Activated CD4-positive, alpha-beta memory T cell treated with anti-CD3 and anti-CD28 coated beads for 36 hours (primary cell): ENCODE measurements at regions of chr14 and their contacts with region 1.

Region 1: DNA sequence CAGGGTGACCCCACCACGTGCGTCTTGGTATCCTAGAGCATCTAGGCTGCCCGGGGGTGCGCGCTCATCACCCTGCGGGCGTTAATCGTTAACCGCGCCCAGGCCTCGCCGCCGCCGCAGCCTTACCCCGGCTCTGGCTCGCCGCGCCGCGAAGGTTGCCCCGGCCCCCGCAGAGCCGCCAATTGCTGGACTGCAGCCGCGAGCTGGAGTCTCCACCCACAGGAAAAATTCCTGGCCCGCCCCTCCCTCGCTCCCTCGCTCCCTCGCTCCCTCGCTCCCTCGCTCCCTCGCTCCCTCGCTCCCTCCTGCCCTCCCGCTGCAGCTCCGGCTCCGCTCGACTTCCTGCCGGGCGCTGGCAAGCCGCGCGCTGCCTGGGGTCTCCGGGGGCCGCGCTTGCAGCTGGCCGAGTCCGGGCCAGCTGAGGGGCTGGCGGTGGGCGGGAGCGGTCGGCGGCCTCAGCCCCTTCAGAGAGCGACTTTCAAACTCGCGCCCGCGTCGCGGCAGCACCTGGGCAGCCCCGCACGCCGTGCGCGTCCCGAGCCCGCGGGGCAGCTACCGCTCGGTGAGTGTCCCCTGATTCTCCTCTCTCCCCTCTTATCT is at the start of gene PLEKHG3:
- DNase-seq: peak; percentile 53
- H3K4me3 Mint-ChIP-seq: peak within 1 kb of the TSS; percentile 77
- H3K27ac Mint-ChIP-seq: peak within 1 kb of the TSS; percentile 82
- H3K4me1 Mint-ChIP-seq: peaks cover 63% of the 10 kb centered on the region
- H3K27me3 Mint-ChIP-seq: no peaks in the 10 kb centered on the region
- total RNA-seq, gene PLEKHG3: 20.1 to 22.6 TPM

Region 2: DNA sequence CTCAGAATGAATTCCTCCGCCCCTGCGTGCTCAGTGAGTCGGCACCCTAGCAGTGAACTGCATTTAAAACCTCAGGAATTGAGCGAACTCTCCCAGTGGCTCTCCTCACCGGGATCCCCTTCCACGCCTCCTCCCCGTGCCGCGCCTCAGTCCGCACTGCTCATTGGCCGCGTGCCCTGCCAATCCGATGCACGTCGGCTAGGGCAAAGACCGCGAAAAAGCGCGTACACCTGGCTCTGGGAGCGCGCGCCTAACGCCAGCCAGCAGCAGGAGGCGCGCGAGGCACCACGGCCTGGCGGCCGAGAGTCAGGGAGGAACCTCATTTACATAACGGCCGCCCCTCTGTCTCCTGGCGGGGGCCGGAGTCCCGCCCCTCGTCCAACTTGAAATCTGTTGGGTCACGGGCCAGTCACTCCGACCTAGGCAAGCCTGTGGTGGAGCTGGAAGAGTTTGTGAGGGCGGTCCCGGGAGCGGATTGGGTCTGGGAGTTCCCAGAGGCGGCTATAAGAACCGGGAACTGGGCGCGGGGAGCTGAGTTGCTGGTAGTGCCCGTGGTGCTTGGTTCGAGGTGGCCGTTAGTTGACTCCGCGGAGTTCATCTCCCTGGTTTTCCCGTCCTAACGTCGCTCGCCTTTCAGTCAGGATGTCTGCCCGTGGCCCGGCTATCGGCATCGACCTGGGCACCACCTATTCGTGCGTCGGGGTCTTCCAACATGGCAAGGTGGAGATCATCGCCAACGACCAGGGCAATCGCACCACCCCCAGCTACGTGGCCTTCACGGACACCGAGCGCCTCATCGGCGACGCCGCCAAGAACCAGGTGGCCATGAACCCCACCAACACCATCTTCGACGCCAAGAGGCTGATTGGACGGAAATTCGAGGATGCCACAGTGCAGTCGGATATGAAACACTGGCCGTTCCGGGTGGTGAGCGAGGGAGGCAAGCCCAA is 163.8 kb before region 1 on chr14 and contains the start of gene HSPA2:
- CTCF ChIA-PET with region 1: no interaction called
- POLR2A ChIA-PET with region 1: no interaction called
- intact Hi-C with region 1: loop called (anchors 5 kb)
- DNase-seq: peak; percentile 98
- H3K4me3 Mint-ChIP-seq: peak within 1 kb of the TSS; percentile 89
- H3K27ac Mint-ChIP-seq: peak within 1 kb of the TSS; percentile 84
- H3K4me1 Mint-ChIP-seq: peaks cover 35% of the 10 kb centered on the region
- H3K27me3 Mint-ChIP-seq: peaks cover 24% of the 10 kb centered on the region
- total RNA-seq, gene HSPA2: 6.6 to 6.7 TPM

Region 3: DNA sequence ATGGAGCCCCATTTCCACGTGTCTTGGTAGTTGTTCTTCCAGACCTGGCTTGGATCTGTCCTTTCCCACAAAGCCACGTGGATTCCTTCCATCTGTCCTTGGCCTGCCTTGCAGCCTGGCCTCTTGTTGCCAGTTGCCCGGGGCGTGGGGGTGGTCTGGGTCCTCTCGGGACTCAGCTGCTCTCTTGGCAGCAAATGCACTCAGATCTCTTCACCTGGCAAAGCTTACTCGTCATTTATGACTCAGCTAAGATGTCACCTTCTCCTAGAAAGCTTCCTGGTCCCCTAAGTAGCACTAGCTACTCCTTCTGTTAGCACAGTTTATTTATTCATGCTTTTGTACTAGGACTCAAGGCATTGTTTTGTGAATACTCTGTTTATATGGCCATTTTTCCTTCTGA is 13.6 kb after region 1 on chr14:
- CTCF ChIA-PET with region 1: interaction called, 4 read pairs
- POLR2A ChIA-PET with region 1: interaction called, 5 read pairs
- intact Hi-C with region 1: loop called (anchors 1 kb)
- DNase-seq: no peak
- H3K4me3 Mint-ChIP-seq: no peak overlapping the region
- H3K27ac Mint-ChIP-seq: peak overlapping the region; percentile 74
- H3K4me1 Mint-ChIP-seq: peaks cover 84% of the 10 kb centered on the region
- H3K27me3 Mint-ChIP-seq: no peaks in the 10 kb centered on the region

Region 4: GRCh38 chr14:64758691-64759584 is 54.7 kb after region 1 on chr14:
- CTCF ChIA-PET with region 1: interaction called, 8 read pairs
- POLR2A ChIA-PET with region 1: no interaction called
- intact Hi-C with region 1: loop called (anchors 5 kb)
- DNase-seq: no peak
- H3K4me3 Mint-ChIP-seq: no peak overlapping the region
- H3K27ac Mint-ChIP-seq: no peak overlapping the region
- H3K4me1 Mint-ChIP-seq: peaks cover 86% of the 10 kb centered on the region
- H3K27me3 Mint-ChIP-seq: no peaks in the 10 kb centered on the region

Region 5: DNA sequence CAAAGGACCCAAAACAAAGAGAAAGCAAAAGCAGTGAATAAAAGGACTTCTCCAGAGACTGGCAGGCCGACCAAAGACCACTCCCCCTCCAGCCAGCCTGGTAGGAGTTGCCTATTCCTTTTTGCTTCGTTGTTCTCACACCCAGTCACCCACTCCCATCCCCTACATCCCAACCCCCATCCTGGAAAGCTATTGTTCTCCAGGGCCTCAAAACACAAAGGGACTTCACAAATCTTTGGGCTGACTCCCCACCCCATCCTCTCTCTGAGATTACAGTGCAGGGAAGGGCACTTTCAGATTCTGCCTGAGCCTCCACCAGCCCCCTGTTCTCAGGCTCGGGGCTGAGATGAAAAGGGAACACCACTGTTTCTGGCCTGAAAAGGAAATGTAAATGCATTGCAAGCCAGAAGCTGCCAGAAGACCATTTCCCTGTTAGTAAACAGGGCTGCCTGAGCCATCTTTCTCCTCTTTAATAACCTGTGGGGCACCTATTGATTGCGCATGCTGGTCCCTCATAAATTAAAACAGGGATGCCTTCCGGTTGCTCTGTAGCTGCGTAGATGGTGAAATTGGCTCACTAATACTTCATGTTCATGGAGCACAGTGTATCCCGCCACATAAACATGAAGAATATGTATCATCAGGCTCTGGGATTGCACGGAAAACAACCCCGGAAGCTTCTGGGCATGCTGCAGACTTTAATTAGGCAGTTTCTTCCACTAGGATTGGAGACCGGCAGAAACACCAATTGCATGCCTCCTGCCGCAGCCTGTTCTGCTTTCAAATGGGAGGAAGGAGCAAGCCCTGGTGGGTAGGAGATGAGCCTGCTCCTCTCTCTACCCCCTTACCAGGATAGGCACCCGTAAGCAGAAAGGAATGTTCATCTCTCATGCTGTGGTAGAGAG is 578.0 kb after region 1 on chr14:
- CTCF ChIA-PET with region 1: no interaction called
- POLR2A ChIA-PET with region 1: no interaction called
- intact Hi-C with region 1: loop called (anchors 10 kb)
- DNase-seq: peak; percentile 36
- H3K4me3 Mint-ChIP-seq: peak overlapping the region; percentile 60
- H3K27ac Mint-ChIP-seq: peak overlapping the region; percentile 52
- H3K4me1 Mint-ChIP-seq: peaks cover 31% of the 10 kb centered on the region
- H3K27me3 Mint-ChIP-seq: no peaks in the 10 kb centered on the region